ENCODE measurements at regions of chr17 and their contacts with region 1.

Region 1: DNA sequence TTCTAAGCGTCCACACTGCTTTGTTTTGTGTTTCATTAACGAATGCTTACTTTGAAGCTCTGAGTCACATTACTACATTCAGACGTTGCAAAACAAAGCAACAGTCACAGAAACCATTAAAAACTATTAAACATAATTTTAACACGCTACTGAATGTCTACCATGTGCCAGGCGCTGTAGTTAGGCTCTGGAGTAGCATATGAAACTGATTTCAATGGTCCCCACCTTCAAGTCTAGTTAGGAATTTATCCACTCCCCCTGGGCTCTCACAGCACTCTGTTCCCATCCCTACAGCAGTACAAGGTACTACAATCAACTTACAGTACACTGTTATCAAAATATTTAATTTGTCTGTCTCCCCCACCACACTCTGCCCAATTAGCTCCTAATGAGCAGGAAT is 631 bp downstream of the UTP6 start:
- DNase-seq: no peak
- H3K4me3 Mint-ChIP-seq: no peak overlapping the region
- H3K27ac Mint-ChIP-seq: no peak overlapping the region
- H3K4me1 Mint-ChIP-seq: peaks cover 12% of the 10 kb centered on the region
- H3K27me3 Mint-ChIP-seq: no peaks in the 10 kb centered on the region

Region 2: DNA sequence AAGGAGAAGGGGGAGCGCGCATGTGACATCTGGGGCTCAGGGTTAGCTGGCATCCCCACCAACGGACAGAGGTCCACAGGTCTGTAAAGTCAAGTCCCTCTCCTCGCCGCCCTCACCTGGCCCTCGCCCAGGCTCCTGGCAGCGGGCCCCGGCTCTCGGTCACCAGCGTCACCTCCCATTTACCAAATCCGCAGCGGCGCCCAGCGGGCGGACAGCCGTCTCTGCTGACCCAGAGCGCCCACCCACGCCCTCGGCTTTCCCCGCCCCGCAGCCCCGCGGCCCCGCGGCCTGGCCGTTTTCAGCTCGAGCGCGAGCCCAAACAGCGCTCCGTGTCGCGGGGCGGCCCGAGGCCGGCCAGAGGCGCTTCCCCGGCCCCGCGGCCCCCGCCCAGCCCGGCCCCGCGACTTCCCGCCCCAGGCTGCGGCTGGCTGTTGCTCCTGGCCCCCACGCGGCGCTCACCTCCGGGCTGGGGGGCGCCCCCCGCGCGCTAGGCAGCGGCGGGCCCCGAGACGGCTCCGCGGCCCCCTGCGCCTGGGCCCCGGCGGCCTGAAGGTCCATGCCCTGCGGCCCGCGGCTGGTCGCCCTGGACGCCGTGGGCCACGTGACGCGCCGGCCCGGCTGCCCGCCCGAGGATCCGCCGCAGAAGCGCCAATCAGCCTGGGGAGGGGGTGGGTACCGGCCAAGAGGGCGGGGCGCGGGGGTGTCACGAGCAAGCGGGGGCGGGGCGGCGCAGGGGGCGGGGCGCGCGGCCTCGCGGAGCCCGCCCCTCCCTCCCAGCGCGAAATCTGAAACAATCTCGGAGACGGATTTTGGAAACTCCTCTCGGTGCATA is 42.0 kb before region 1 on chr17 and contains the start of gene COPRS:
- intact Hi-C with region 1: loop called (anchors 1 kb)
- DNase-seq: peak; percentile 93
- H3K4me3 Mint-ChIP-seq: peak within 1 kb of the TSS; percentile 87
- H3K27ac Mint-ChIP-seq: peak within 1 kb of the TSS; percentile 90
- H3K4me1 Mint-ChIP-seq: peaks cover 19% of the 10 kb centered on the region
- H3K27me3 Mint-ChIP-seq: no peaks in the 10 kb centered on the region
- total RNA-seq, gene COPRS: 67.9 and 69.4 TPM in 2 replicates

Region 3: DNA sequence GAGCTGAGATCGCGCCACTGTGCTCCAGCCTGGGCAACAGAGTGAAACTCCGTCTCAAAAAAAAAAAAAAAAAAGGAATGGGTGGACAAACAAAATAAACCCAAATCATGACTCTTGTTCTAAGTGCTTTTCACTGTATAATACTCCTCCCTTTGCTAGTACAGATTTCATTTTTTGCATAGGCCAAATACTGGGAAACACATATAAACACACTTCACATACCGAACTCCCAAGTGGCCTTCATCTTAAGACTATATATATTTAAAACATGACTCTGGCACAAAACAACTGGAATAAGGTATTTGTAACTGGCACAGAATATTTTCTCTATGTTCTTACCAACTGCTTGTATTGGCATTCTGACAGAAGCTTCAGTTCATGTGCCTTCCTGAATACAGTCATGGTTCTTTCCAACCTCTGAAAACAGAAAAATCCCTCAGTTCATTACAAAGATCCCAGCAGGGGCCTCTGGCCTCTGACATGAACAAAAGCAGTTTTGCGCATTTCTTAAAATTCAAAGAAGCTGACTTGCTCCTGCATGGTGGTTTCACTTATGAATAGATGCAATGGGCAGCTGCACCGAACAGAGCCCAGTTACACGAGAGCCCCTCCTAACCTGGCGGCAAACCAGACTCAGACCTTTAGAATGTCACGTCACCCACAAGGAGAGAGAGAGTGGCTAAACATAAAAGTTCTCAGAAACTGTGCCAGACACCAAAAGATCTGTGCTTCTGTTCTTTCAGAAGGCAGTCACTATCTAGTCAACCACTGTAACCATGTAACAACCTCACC is 22.8 kb before region 1 on chr17:
- intact Hi-C with region 1: loop called (anchors 2 kb)
- DNase-seq: peak; percentile 69
- H3K4me3 Mint-ChIP-seq: peak overlapping the region; percentile 54
- H3K27ac Mint-ChIP-seq: peak overlapping the region; percentile 95
- H3K4me1 Mint-ChIP-seq: peaks cover 17% of the 10 kb centered on the region
- H3K27me3 Mint-ChIP-seq: no peaks in the 10 kb centered on the region

Region 4: GRCh38 chr17:31919802-31920525 is 19.1 kb after region 1 on chr17:
- intact Hi-C with region 1: loop called (anchors 2 kb)
- DNase-seq: no peak
- H3K4me3 Mint-ChIP-seq: peak overlapping the region; percentile 68
- H3K27ac Mint-ChIP-seq: peak overlapping the region; percentile 98
- H3K4me1 Mint-ChIP-seq: peaks cover 16% of the 10 kb centered on the region
- H3K27me3 Mint-ChIP-seq: peaks cover 19% of the 10 kb centered on the region

Region 5: DNA sequence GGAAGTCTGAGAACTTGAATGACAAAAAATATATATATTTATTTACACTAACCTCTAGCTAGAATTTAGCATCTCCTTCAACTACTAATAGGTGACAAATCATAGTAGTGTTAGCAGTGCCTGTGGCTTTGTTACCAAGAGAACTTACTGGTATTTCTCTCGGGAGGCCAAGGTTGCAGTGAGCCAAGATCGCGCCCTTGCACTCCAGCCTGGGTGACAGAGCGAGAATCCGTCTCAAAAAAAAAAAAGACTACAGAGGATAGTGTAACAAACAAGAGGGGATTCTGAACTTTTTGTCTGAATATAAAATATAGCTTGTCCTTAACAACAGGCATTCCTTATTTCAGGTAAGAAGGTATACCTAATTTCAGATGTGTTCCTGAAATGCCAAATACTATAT is 34.6 kb after region 1 on chr17:
- intact Hi-C with region 1: loop called (anchors 1 kb)
- DNase-seq: no peak
- H3K4me3 Mint-ChIP-seq: peak overlapping the region; percentile 84
- H3K27ac Mint-ChIP-seq: no peak overlapping the region
- H3K4me1 Mint-ChIP-seq: peaks cover 15% of the 10 kb centered on the region
- H3K27me3 Mint-ChIP-seq: no peaks in the 10 kb centered on the region

Measured in activated CD4-positive, alpha-beta T cell treated with anti-CD3 and anti-CD28 coated beads, Interleukin-2, amount 10 ng/mL, durations not matched to agents 24 days and 14 days (primary cell).